ENCODE measurements at regions of chr16 and their contacts with region 1.

Region 1: DNA sequence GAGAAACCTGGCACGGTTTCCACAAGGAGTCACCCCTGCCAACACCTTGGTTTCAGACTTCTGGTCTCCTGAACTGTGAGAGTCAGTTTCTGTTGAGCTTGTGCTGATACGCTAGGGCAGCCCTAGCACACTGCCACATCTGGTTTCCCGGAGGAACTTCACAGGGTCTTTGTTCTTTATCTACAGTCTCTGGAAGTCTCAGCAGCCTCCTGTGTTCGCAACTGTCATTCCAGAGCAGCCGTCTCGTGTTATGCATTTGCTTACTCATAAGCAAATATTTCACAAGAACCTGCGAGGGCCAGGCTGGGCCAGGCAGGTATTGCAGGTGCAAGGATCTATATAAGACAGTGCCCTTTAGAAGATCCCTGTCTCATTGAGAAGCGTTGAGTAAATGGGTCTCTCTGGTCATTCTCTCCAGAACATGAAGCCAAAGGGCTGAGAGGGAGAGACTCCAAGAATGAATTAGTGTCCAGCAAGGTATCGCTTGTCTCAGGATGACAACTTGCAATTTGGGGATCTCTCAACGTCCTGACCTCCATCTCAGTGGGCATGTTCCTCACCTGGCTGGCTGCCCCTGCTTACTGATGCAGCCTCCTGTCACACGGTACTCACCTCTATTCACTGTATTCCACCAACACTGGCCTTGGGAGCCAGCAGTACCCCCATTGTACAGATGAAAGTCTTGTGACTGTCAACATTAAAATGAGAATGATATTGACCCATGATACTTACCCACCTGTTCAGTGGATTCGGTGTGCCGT is 141.2 kb downstream of the WWOX start:
- DNase-seq: peak; percentile 93 to 96
- H3K4me3 ChIP-seq: no peak overlapping the region
- H3K4me3 Mint-ChIP-seq: peak overlapping the region; percentile 52
- H3K27ac Mint-ChIP-seq: peak overlapping the region; percentile 97
- H3K4me1 ChIP-seq: peaks cover 65% of the 10 kb centered on the region
- H3K4me1 Mint-ChIP-seq: peaks cover 83% of the 10 kb centered on the region
- H3K27me3 ChIP-seq: no peaks in the 10 kb centered on the region
- H3K27me3 Mint-ChIP-seq: no peaks in the 10 kb centered on the region
- CTCF ChIP-seq: peak; percentile 60 to 73

Region 2: GRCh38 chr16:78200623-78201096 is 40.0 kb before region 1 on chr16:
- CTCF ChIA-PET with region 1: no interaction called
- POLR2A ChIA-PET with region 1: no interaction called
- intact Hi-C with region 1: loop called (anchors 2 kb)
- DNase-seq: peak; percentile 44 to 51
- H3K4me3 ChIP-seq: no peak overlapping the region
- H3K4me3 Mint-ChIP-seq: peak overlapping the region; percentile 55
- H3K27ac Mint-ChIP-seq: peak overlapping the region; percentile 97
- H3K4me1 ChIP-seq: peaks cover 40% of the 10 kb centered on the region
- H3K4me1 Mint-ChIP-seq: peaks cover 47% of the 10 kb centered on the region
- H3K27me3 ChIP-seq: no peaks in the 10 kb centered on the region
- H3K27me3 Mint-ChIP-seq: no peaks in the 10 kb centered on the region
- CTCF ChIP-seq: no peak

Region 3: GRCh38 chr16:78257376-78257728 is 16.7 kb after region 1 on chr16:
- CTCF ChIA-PET with region 1: interaction called, 4 read pairs
- POLR2A ChIA-PET with region 1: no interaction called
- intact Hi-C with region 1: loop called (anchors 1 kb)
- DNase-seq: peak in 1 of 2 experiments; percentile 37
- H3K4me3 ChIP-seq: no peak overlapping the region
- H3K4me3 Mint-ChIP-seq: peak overlapping the region; percentile 53
- H3K27ac Mint-ChIP-seq: peak overlapping the region; percentile 71
- H3K4me1 ChIP-seq: peaks cover 44% of the 10 kb centered on the region
- H3K4me1 Mint-ChIP-seq: peaks cover 29% of the 10 kb centered on the region
- H3K27me3 ChIP-seq: no peaks in the 10 kb centered on the region
- H3K27me3 Mint-ChIP-seq: no peaks in the 10 kb centered on the region
- CTCF ChIP-seq: no peak

Region 4: GRCh38 chr16:78342336-78342735 is 101.7 kb after region 1 on chr16:
- CTCF ChIA-PET with region 1: no interaction called
- POLR2A ChIA-PET with region 1: no interaction called
- intact Hi-C with region 1: loop called (anchors 5 kb)
- DNase-seq: no peak
- H3K4me3 ChIP-seq: no peak overlapping the region
- H3K4me3 Mint-ChIP-seq: no peak overlapping the region
- H3K27ac Mint-ChIP-seq: no peak overlapping the region
- H3K4me1 ChIP-seq: peaks cover 6% of the 10 kb centered on the region; the same call in 1 of the 2 replicates
- H3K4me1 Mint-ChIP-seq: peaks cover 5% of the 10 kb centered on the region
- H3K27me3 ChIP-seq: no peaks in the 10 kb centered on the region
- H3K27me3 Mint-ChIP-seq: no peaks in the 10 kb centered on the region
- CTCF ChIP-seq: no peak

Region 5: DNA sequence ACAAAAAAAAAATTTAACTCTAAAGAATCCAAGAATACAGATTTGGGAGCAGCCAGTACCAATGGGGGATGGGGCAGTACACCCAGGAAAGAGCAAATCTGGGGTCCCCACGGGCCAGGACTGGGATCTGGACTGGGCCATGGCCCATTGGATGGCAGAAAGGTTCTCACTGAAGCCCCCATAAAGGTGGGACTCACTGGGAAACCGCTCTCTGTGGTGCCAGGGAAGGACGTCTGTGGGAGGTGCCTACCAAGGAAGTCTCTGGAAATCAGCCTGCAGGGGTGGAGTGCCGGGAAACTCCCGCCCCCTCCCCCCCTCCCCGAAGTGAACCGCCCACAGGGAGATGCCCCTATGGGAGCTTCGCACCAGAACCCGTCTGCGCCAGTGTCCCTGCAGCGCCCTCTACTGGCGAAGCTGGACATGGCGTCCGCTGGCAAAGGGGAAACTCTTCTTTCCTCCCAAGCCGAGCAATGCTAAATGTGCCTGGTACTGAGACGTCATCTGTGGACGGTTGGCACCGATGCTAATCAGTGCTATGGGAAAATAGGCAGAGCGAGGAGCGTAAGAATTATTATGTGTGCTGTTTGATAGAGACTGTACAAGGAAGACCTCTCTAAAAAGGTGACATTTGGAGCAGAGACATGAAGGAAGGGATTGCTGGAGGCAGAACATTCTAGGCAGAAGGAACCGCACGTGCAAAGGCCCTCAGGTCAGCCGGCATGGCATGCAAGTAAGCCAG is 529.9 kb after region 1 on chr16:
- CTCF ChIA-PET with region 1: no interaction called
- POLR2A ChIA-PET with region 1: no interaction called
- intact Hi-C with region 1: loop called (anchors 5 kb)
- DNase-seq: peak; percentile 61 to 71
- H3K4me3 ChIP-seq: no peak overlapping the region
- H3K4me3 Mint-ChIP-seq: no peak overlapping the region
- H3K27ac Mint-ChIP-seq: no peak overlapping the region
- H3K4me1 ChIP-seq: no peaks in the 10 kb centered on the region
- H3K4me1 Mint-ChIP-seq: no peaks in the 10 kb centered on the region
- H3K27me3 ChIP-seq: no peaks in the 10 kb centered on the region
- H3K27me3 Mint-ChIP-seq: no peaks in the 10 kb centered on the region
- CTCF ChIP-seq: peak; percentile 59 to 69

Measured in Caco-2 (cell line).